ENCODE measurements at regions of chr1 and their contacts with region 1.

Region 1: DNA sequence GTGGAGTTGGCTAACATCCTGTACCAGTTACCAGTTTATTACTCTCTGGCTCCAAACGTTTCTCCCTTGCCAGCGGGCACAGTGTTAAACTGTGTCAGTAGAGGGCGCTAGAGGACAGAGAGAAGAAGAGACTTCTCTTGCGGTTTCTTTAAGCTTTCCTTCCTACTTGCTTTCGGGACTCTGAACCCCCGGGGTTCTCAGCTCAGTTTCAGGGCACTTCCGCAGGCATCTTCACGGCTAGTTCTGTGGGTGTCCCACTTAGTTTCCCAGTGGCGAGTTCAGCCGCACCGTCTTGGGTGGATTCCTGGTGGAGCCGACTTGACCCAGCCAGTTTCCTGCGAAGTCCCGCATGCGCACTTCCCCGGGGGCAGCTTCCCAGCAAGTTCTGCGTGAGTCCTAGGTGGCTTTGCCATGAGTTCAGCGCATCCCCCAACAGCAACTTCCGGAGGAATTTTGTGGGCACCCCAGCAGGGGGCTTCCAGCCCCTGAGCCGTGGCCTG is 37.9 kb upstream of the BTG2 start:
- DNase-seq: peak; percentile 80
- H3K4me3 ChIP-seq: peak overlapping the region; percentile 65
- H3K27ac ChIP-seq: peak overlapping the region in 1 of 2 experiments; percentile 75; a peak in 1 of 4 replicates
- H3K4me1 ChIP-seq: peaks cover 0 to 15% of the 10 kb centered on the region in 2 experiments; a peak in 1 of 4 replicates
- H3K27me3 ChIP-seq: no peaks in the 10 kb centered on the region; the same call in 1 of the 2 replicates
- CTCF ChIP-seq: peak; percentile 95
- EP300 ChIP-seq: no peak
- RAD21 ChIP-seq: peak; percentile 79

Region 2: GRCh38 chr1:203069030-203069747 is 198.2 kb before region 1 on chr1:
- CTCF ChIA-PET with region 1: interaction called, 12 read pairs
- POLR2A ChIA-PET with region 1: no interaction called
- DNase-seq: peak; percentile 63
- H3K4me3 ChIP-seq: no peak overlapping the region
- H3K27ac ChIP-seq: peak overlapping the region in 1 of 2 experiments; percentile 87; a peak in 2 of 4 replicates
- H3K4me1 ChIP-seq: peaks cover 0 to 19% of the 10 kb centered on the region in 2 experiments; a peak in 2 of 4 replicates
- H3K27me3 ChIP-seq: no peaks in the 10 kb centered on the region
- CTCF ChIP-seq: no peak
- EP300 ChIP-seq: no peak
- RAD21 ChIP-seq: no peak

Region 3: DNA sequence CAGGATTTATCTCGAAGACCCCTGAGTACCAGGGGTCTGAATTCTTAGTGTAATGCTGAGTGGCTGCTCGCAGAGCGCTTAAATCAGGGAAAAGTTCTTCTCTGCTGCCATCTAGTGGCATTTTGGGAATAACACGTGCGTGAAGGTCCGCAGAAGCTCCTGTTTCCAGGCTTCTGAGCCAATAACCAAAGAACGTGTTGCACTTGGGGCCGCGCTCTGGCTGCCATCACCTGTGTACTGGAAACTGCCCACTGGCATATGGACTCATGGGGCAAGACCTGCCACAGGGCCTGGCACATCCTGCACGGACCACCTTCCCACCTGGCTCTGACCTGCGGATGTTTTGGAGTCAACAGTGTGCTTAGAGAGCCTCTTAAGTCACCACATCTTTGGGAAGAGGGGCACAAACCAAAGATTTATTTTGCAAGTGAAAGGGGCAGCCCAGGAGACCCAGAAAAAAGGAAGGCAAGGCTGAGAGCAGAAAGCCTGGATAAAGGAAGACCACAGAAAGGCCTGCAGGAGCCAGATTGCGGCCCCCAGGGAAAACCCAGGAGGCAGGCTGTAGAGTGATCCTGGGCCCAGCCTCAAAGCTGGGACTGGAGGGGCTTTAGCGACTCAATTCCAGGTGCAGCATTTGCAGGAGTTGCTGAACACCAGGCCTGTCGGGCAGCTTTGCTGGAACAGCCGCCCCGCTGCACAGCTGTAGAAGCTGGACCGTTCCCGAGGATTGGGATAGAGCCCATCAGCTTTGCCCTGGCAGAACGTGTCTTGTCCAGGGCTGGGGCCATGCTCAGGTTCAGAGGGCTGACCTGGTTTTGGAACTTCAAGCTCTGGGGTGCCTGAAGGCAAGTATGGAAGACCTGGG is 50.9 kb before region 1 on chr1:
- CTCF ChIA-PET with region 1: interaction called, 82 read pairs
- POLR2A ChIA-PET with region 1: no interaction called
- DNase-seq: peak; percentile 74
- H3K4me3 ChIP-seq: no peak overlapping the region; a peak in 1 of 4 replicates
- H3K27ac ChIP-seq: no peak overlapping the region
- H3K4me1 ChIP-seq: peaks cover 0 to 2% of the 10 kb centered on the region in 2 experiments; a peak in 1 of 4 replicates
- H3K27me3 ChIP-seq: peaks cover 18% of the 10 kb centered on the region
- CTCF ChIP-seq: peak; percentile 79
- EP300 ChIP-seq: no peak
- RAD21 ChIP-seq: peak; percentile 94

Region 4: DNA sequence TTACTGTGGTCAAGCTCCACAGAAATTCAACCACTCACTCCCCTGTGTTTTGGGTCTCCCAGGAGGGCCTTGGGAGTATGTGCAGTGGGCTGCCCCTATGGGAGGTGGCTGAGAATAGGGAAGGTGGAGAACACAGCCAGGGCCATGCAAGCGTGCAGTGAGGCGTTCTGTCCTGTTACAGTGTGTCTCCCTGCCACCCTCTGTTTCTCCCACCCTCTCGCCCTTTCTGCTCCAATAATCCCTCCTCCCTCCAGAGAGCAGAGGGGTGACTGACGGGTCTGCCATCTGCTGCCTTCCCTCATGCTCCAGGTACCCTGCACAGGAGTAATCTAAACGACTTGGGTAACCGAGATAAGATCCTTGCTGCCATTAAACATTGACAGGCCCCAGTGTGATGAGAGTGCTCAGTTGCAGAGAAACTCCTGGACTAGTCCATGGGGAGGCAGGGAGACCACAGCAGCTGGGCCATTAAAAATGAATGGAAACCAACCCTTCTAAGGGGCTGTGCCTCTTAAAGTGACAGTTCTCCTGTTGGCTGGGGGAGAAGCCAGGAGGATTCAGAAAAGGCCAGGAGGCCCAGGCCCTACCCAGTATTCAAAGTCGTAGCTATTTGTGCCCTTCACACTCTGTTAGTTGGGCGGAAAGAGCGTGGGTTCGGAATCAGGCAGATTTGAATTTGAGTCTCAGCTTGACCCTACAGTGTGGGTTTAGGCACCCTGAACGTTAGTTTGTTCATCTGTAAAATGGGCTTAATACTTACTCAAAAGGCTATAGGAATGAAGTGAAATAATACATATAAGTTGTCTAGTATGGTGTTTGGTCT is 15.5 kb after region 1 on chr1:
- CTCF ChIA-PET with region 1: interaction called, 108 read pairs
- POLR2A ChIA-PET with region 1: no interaction called
- DNase-seq: no peak
- H3K4me3 ChIP-seq: no peak overlapping the region
- H3K27ac ChIP-seq: no peak overlapping the region
- H3K4me1 ChIP-seq: peaks cover 0 to 32% of the 10 kb centered on the region in 2 experiments; a peak in 2 of 4 replicates
- H3K27me3 ChIP-seq: 0 out of 2 replicates have a peak, but pooled peaks cover 4% of the 10 kb centered on the region
- CTCF ChIP-seq: no peak
- EP300 ChIP-seq: no peak
- RAD21 ChIP-seq: no peak

Region 5: GRCh38 chr1:203361945-203362719 is 94.7 kb after region 1 on chr1:
- CTCF ChIA-PET with region 1: interaction called, 40 read pairs
- POLR2A ChIA-PET with region 1: no interaction called
- DNase-seq: no peak
- H3K4me3 ChIP-seq: no peak overlapping the region
- H3K27ac ChIP-seq: peak overlapping the region in 1 of 2 experiments; percentile 97; a peak in 2 of 4 replicates
- H3K4me1 ChIP-seq: peaks cover 0 to 48% of the 10 kb centered on the region in 2 experiments; a peak in 2 of 4 replicates
- H3K27me3 ChIP-seq: peaks cover 41% of the 10 kb centered on the region; the same call in 1 of the 2 replicates
- CTCF ChIP-seq: no peak
- EP300 ChIP-seq: no peak
- RAD21 ChIP-seq: no peak

Region 6: GRCh38 chr1:203486618-203487370 is 219.4 kb after region 1 on chr1:
- CTCF ChIA-PET with region 1: interaction called, 34 read pairs
- POLR2A ChIA-PET with region 1: no interaction called
- DNase-seq: no peak
- H3K4me3 ChIP-seq: no peak overlapping the region; a peak in 1 of 4 replicates
- H3K27ac ChIP-seq: peak overlapping the region in 1 of 2 experiments; percentile 83; a peak in 2 of 4 replicates
- H3K4me1 ChIP-seq: peaks cover 0 to 11% of the 10 kb centered on the region in 2 experiments; a peak in 1 of 4 replicates
- H3K27me3 ChIP-seq: no peaks in the 10 kb centered on the region
- CTCF ChIP-seq: no peak
- EP300 ChIP-seq: no peak
- RAD21 ChIP-seq: no peak